Activated CD8-positive, alpha-beta T cell treated with anti-CD3 and anti-CD28 coated beads for 36 hours (primary cell): ENCODE measurements at regions of chr10 and their contacts with region 1.

Region 1: DNA sequence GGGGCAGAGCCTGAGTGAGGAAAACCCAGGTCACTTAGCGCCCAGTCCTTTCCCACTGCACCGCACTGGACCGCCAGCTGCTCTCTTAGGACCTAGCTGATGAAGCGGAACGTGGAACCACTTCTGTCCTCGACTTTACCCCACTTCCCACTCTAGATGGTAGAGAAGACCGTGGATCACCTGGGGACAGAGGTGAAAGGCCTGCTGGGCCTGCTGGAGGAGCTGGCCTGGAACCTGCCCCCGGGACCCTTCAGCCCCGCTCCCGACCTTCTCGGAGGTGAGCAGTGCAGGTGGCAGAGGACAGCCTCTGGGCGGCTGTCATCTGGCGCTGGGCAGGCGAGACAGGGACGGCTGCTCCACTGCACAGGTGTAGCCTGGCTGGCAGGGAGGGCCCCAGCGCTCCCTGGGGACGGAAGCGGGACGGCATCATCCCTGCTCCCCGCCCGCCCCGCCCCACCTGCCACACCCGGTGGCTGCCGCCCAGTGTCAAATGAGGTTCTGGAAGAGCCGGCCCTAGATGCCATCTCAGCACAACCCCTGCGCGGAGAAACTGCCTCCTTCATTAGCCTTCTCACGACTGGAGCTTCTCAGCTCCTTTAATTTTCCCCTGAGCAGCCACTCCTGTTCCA is 11.7 kb downstream of the PLAC9 start:
- DNase-seq: peak; percentile 39
- ATAC-seq: peak; percentile 64
- H3K4me3 Mint-ChIP-seq: peak overlapping the region; percentile 63
- H3K27ac Mint-ChIP-seq: no peak overlapping the region
- H3K4me1 Mint-ChIP-seq: peaks cover 18% of the 10 kb centered on the region
- H3K27me3 Mint-ChIP-seq: no peaks in the 10 kb centered on the region
- CTCF ChIP-seq: peak; percentile 61

Region 2: GRCh38 chr10:80154975-80155695 is 11.0 kb after region 1 on chr10:
- CTCF ChIA-PET with region 1: interaction called, 24 read pairs
- POLR2A ChIA-PET with region 1: no interaction called
- intact Hi-C with region 1: no loop called
- DNase-seq: no peak
- ATAC-seq: no peak
- H3K4me3 Mint-ChIP-seq: no peak overlapping the region
- H3K27ac Mint-ChIP-seq: peak overlapping the region; percentile 68
- H3K4me1 Mint-ChIP-seq: peaks cover 10% of the 10 kb centered on the region
- H3K27me3 Mint-ChIP-seq: no peaks in the 10 kb centered on the region
- CTCF ChIP-seq: no peak

Region 3: DNA sequence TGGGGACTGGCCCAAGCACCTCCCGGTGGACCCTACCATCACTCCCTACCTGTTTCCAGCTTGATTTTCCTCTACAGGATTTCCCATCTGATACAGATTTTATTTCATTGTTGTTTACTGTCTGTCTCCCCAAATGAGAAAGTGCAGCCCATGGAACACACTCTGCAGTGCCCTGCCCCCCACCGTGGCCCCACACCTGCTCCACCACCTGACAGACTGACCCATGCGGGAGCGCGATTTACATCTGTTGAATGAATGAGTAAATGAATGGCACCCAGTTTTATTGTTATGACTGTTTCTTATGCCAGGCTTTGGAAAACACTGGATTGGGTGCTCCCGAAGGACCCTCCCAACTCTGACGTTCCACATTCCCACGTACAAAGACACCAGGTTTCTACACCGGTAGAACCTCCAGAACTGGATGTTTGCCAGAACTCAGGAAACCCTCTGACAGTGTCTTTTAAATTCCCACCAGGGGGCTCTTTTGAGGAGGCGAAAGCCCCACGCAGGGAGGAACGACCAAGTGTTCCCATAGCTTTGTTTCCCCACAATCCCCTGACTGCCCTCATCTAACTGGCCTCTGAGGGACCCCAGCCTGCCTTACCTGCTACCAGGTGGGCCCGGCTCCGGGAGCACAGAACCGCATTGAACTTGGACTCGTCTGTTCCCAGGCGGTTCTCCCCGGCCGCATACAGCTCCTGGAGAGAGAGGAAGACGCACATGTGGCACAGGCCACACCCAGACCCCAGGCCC is 17.3 kb after region 1 on chr10:
- CTCF ChIA-PET with region 1: interaction called, 15 read pairs
- POLR2A ChIA-PET with region 1: no interaction called
- intact Hi-C with region 1: no loop called
- DNase-seq: no peak
- ATAC-seq: no peak
- H3K4me3 Mint-ChIP-seq: no peak overlapping the region
- H3K27ac Mint-ChIP-seq: peak overlapping the region; percentile 46
- H3K4me1 Mint-ChIP-seq: peaks cover 15% of the 10 kb centered on the region
- H3K27me3 Mint-ChIP-seq: no peaks in the 10 kb centered on the region
- CTCF ChIP-seq: peak; percentile 21

Region 4: DNA sequence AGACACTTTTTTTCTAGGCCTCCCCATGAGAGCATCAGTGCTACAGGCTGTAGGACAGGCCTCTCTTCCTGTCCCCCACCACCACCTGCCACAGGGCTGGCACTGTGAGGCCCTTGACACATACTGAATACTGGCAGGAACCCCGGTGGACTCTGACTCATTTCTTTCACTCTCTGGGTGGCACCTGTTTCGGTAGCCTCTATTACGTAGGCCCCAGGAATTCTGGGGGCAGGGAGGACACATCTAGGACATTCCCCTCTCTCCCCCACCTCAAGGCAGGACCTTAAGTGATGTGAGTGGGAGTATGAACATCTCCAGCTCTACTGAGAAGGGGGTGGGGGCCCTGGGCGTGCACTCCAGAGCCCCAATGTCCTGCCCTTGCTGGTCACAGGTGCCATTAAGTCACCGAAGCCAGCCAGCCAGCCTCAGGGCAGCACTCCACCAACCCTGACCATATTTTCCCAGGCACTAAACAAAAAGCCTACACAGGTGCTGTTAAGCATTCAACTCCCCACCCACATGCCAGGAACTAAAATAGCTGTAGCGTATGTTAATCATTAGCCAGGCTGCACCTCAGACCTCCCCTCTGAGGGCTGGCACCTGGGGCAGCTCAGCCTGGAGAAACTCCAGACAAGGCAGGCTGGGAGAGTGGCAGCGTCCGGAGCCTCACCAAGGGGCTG is 52.2 kb after region 1 on chr10:
- CTCF ChIA-PET with region 1: interaction called, 28 read pairs
- POLR2A ChIA-PET with region 1: no interaction called
- intact Hi-C with region 1: no loop called
- DNase-seq: peak; percentile 90
- ATAC-seq: peak; percentile 96
- H3K4me3 Mint-ChIP-seq: peak overlapping the region; percentile 31
- H3K27ac Mint-ChIP-seq: peak overlapping the region; percentile 92
- H3K4me1 Mint-ChIP-seq: peaks cover 80% of the 10 kb centered on the region
- H3K27me3 Mint-ChIP-seq: no peaks in the 10 kb centered on the region
- CTCF ChIP-seq: no peak

Region 5: DNA sequence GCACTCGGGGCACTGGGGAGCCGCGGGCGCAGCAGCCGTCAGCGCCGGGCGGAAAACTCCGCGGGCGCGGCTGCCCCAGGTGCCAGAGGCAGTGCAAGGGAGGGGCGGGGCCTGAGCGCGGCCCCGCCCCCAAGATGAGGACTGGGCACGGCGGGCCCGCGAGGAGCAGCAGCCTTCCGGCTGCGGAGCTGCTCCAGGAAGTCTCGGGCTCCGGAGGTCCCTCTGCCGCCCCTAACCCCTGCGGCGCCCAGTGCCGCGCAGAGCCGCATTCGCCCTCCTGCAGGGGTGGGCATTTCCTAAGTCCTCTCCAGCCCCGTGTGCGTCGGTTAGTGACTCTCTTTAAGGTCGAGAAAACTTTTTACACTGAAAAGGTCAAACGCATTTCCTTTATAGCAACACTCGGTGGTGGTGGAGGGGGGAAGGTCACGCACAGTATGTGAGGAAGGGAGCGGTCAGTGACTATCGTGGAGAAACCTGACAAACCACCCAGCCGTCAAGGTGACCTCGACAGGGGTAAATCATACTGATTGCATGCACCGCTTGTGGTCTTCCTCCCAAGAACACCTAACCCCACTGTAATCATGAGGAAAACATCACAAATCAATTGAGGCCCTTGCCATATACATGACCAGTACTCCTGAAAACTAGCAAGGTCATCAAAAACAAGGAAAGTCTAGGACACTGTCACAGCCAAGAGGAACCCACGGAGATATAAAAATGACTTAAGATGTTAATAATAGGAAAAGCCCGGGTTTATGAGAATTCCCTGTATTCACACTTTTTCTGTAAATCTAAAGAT is 61.5 kb after region 1 on chr10 and contains the start of gene ANXA11:
- CTCF ChIA-PET with region 1: interaction called, 28 read pairs
- POLR2A ChIA-PET with region 1: interaction called, 10 read pairs
- intact Hi-C with region 1: loop called (anchors 5 kb)
- DNase-seq: peak; percentile 87
- ATAC-seq: peak; percentile 70
- H3K4me3 Mint-ChIP-seq: peak within 1 kb of the TSS; percentile 92
- H3K27ac Mint-ChIP-seq: peak within 1 kb of the TSS; percentile 98
- H3K4me1 Mint-ChIP-seq: peaks cover 44% of the 10 kb centered on the region
- H3K27me3 Mint-ChIP-seq: no peaks in the 10 kb centered on the region
- CTCF ChIP-seq: no peak
- total RNA-seq, gene ANXA11: 226 to 238 TPM

Region 6: DNA sequence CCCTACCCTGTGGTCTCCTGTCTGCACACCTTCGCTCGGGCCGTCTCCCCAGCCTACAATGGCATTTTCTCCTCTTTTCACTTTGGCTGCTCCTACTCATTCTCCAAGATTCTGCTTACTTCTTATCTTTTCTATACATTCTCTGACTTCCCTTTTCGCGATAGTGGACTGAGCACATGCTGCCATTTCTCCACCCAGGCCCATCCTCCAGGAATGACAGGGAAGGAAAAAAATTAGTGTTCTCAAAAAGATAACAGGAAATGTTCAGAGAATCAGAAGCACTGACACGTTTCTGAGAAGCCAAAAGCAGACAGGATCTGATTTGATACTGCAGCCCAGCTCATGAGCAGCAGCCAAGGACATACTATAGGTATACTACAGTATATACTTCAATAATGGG is 67.6 kb after region 1 on chr10:
- CTCF ChIA-PET with region 1: interaction called, 10 read pairs
- POLR2A ChIA-PET with region 1: no interaction called
- intact Hi-C with region 1: loop called (anchors 5 kb)
- DNase-seq: no peak
- ATAC-seq: no peak
- H3K4me3 Mint-ChIP-seq: no peak overlapping the region
- H3K27ac Mint-ChIP-seq: no peak overlapping the region
- H3K4me1 Mint-ChIP-seq: peaks cover 10% of the 10 kb centered on the region
- H3K27me3 Mint-ChIP-seq: no peaks in the 10 kb centered on the region
- CTCF ChIP-seq: no peak

Region 7: GRCh38 chr10:80260295-80261243 is 116.4 kb after region 1 on chr10:
- CTCF ChIA-PET with region 1: interaction called, 13 read pairs
- POLR2A ChIA-PET with region 1: no interaction called
- intact Hi-C with region 1: no loop called
- DNase-seq: peak; percentile 40
- ATAC-seq: peak; percentile 76
- H3K4me3 Mint-ChIP-seq: no peak overlapping the region
- H3K27ac Mint-ChIP-seq: no peak overlapping the region
- H3K4me1 Mint-ChIP-seq: no peaks in the 10 kb centered on the region
- H3K27me3 Mint-ChIP-seq: no peaks in the 10 kb centered on the region
- CTCF ChIP-seq: peak; percentile 94